Panc1 (cell line): ENCODE measurements at regions of chr17 and their contacts with region 1.

Region 1: DNA sequence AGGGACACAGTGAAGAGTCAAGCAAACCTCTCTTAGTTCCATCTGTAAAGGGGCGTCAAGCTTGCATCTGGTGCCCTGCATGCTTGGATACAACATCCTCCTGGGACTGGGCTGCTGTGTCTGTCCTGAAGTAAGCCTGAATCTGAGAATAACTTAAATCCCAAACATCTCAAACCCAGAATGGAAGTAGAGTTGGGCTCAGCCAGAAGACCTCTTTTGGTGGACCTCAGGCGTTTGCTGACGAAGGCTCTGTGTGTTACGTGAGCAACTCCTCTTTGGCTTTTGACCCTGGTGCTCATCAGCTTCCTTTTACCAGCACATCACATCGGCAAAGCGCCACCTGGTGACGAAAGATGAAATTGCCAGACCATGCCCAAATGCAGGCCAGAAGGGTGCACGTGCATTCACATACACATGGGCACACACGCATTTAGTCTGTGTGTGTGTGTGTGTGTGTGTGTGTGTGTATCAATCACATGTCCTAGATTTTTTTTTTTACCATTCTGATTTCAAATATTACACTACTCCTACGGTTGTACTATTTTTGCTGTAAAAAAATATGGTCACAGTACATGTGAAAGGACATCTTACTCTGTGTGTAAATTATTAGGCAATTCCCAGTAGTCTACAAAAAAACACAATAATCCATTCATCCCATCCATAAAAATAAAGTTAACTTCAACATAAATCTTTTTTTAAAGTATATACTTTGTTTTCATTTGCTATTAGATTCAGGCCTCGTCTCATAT is 41.1 kb upstream of the FOXJ1 start:
- DNase-seq: peak; percentile 89
- ATAC-seq: peak; percentile 98
- H3K4me3 ChIP-seq: no peak overlapping the region
- H3K27ac ChIP-seq: no peak overlapping the region
- H3K4me1 ChIP-seq: no peaks in the 10 kb centered on the region
- H3K27me3 ChIP-seq: no peaks in the 10 kb centered on the region
- CTCF ChIP-seq: peak; percentile 92

Region 2: DNA sequence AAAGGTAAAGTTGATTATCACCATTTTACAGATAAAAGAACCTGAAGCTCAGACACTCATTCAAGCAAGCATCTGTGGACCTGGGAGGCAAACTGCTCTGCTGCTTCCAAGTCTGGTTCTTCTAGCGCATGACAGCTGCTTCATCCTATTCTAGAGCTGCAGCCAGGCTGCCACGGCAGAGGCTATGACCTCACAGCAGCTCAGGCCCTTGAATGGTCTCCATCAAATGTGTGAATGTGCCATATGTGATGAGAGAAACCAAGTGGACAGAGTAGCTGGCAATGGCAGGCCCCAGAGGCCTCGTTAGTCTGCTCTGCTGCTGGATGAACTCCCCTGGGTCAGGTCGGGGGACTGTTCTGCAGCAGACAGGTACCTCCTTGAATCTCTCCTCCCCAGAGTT is 10.5 kb before region 1 on chr17:
- CTCF ChIA-PET with region 1: interaction called, 11 read pairs
- POLR2A ChIA-PET with region 1: no interaction called
- in situ Hi-C with region 1: no loop called
- intact Hi-C with region 1: no loop called
- DNase-seq: no peak
- ATAC-seq: no peak
- H3K4me3 ChIP-seq: no peak overlapping the region
- H3K27ac ChIP-seq: no peak overlapping the region
- H3K4me1 ChIP-seq: no peaks in the 10 kb centered on the region; the same call in 1 of the 2 replicates
- H3K27me3 ChIP-seq: no peaks in the 10 kb centered on the region; the same call in 1 of the 2 replicates
- CTCF ChIP-seq: no peak

Region 3: DNA sequence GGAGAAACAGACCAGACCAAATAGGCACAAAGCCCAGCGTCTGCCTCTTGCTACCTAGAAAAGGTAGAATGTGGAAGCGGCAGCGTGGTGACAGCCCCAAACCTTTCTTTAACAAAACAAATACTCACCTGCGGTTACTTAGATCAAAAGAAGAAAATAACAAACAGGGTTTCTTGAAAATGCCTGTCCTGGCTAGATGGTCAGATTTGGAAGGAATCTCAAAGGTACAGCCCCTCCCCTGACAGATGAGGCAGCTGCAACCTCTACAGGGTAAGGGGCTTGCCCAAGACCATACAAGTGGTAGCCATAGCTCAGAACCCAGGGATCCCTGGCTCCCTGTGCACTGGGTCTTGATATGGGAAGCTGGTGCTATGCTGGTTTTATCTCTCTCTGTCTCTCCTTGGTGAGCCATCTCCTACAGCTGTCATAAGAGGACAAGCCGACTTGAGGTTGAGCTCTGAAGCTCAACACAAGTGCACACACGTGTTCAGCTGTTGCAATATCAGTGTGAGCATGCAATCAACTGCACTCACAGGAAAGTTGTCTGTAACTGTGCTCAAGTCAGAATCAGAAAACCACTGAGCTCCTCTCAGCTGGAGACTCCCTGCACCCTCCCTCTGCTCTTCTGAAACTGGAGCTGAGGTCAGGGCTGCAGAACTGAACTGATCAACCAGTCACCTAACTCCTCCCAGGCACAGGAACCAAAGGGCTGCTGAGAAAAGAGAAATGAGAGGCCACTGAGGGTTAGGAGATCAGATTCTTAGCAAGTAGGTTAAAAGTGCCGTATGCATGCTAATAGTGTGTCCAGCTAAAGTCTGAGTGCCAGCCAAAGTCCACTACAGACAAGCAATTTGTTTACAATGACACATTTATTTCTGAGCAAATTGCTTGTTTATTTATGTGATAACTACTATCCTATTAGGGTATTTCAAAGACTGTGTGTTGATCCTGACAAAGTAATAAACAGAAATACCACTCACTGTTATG is 64.2 kb after region 1 on chr17:
- CTCF ChIA-PET with region 1: interaction called, 11 read pairs
- POLR2A ChIA-PET with region 1: interaction called, 5 read pairs
- in situ Hi-C with region 1: no loop called
- intact Hi-C with region 1: no loop called
- DNase-seq: no peak
- ATAC-seq: peak; percentile 44; the same call in 1 of the 2 replicates
- H3K4me3 ChIP-seq: no peak overlapping the region
- H3K27ac ChIP-seq: no peak overlapping the region
- H3K4me1 ChIP-seq: no peaks in the 10 kb centered on the region; the same call in 1 of the 2 replicates
- H3K27me3 ChIP-seq: peaks cover 2% of the 10 kb centered on the region; the same call in 1 of the 2 replicates
- CTCF ChIP-seq: no peak